ENCODE measurements at regions of chr4 and their contacts with region 1.

Region 1: GRCh38 chr4:149370785-149371420 is 444.7 kb downstream of the IQCM start:
- DNase-seq: no peak
- ATAC-seq: no peak
- H3K4me3 ChIP-seq: no peak overlapping the region
- H3K4me3 Mint-ChIP-seq: no peak overlapping the region
- H3K27ac ChIP-seq: no peak overlapping the region
- H3K27ac Mint-ChIP-seq: no peak overlapping the region
- H3K4me1 ChIP-seq: no peaks in the 10 kb centered on the region
- H3K4me1 Mint-ChIP-seq: no peaks in the 10 kb centered on the region
- H3K27me3 ChIP-seq: no peaks in the 10 kb centered on the region
- H3K27me3 Mint-ChIP-seq: no peaks in the 10 kb centered on the region

Region 2: GRCh38 chr4:149897783-149898182 is 526.9 kb after region 1 on chr4:
- CTCF ChIA-PET with region 1: no interaction called
- POLR2A ChIA-PET with region 1: no interaction called
- intact Hi-C with region 1: loop called in 1 of 2 experiments (anchors 5 kb)
- DNase-seq: no peak
- ATAC-seq: no peak
- H3K4me3 ChIP-seq: no peak overlapping the region
- H3K4me3 Mint-ChIP-seq: no peak overlapping the region
- H3K27ac ChIP-seq: no peak overlapping the region
- H3K27ac Mint-ChIP-seq: no peak overlapping the region
- H3K4me1 ChIP-seq: no peaks in the 10 kb centered on the region
- H3K4me1 Mint-ChIP-seq: no peaks in the 10 kb centered on the region
- H3K27me3 ChIP-seq: no peaks in the 10 kb centered on the region
- H3K27me3 Mint-ChIP-seq: peaks cover 0 to 6% (median 2%) of the 10 kb centered on the region in 5 donors

Region 3: DNA sequence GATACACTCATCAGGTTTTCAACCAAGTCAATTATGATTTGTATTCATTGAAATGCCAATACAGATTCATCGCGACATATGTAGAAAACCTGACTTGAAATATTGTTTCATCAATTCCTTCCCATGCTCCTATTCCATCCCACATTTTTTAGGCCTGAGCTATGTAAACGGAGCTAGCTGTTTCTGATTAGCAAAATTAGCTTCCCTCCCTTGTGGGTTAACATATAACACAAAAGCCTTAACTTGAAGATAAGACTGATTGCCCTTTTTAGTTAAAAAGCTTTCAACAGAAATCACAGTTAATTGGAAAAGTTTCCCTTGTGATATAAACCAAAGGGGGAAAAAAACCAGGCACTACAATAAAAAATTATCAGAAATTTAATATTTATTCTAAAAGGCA is 674.5 kb after region 1 on chr4:
- CTCF ChIA-PET with region 1: no interaction called
- POLR2A ChIA-PET with region 1: no interaction called
- intact Hi-C with region 1: no loop called
- DNase-seq: no peak
- ATAC-seq: no peak
- H3K4me3 ChIP-seq: no peak overlapping the region
- H3K4me3 Mint-ChIP-seq: no peak overlapping the region
- H3K27ac ChIP-seq: no peak overlapping the region
- H3K27ac Mint-ChIP-seq: no peak overlapping the region
- H3K4me1 ChIP-seq: no peaks in the 10 kb centered on the region
- H3K4me1 Mint-ChIP-seq: no peaks in the 10 kb centered on the region
- H3K27me3 ChIP-seq: peaks cover 0 to 3% of the 10 kb centered on the region in 2 donors
- H3K27me3 Mint-ChIP-seq: peaks cover 2 to 16% (median 10%) of the 10 kb centered on the region in 5 donors